ENCODE measurements at regions of chr5 and their contacts with region 1.

Region 1: GRCh38 chr5:139517683-139518564 is 35.4 kb upstream of the STING1 start:
- DNase-seq: peak; percentile 57 to 89
- H3K4me3 ChIP-seq: peak overlapping the region; percentile 60
- H3K27ac ChIP-seq: no peak overlapping the region
- H3K4me1 ChIP-seq: no peaks in the 10 kb centered on the region
- H3K27me3 ChIP-seq: no peaks in the 10 kb centered on the region
- CTCF ChIP-seq: peak; percentile 93

Region 2: GRCh38 chr5:139422307-139422893 is 95.5 kb before region 1 on chr5:
- CTCF ChIA-PET with region 1: interaction called, 15 read pairs
- POLR2A ChIA-PET with region 1: no interaction called
- intact Hi-C with region 1: loop called (anchors 1 kb)
- DNase-seq: peak; percentile 33 to 55
- H3K4me3 ChIP-seq: no peak overlapping the region
- H3K27ac ChIP-seq: no peak overlapping the region
- H3K4me1 ChIP-seq: no peaks in the 10 kb centered on the region
- H3K27me3 ChIP-seq: no peaks in the 10 kb centered on the region
- CTCF ChIP-seq: peak; percentile 83

Region 3: GRCh38 chr5:139482050-139482889 is 35.7 kb before region 1 on chr5 and contains the start of gene STING1:
- CTCF ChIA-PET with region 1: interaction called, 6 read pairs
- POLR2A ChIA-PET with region 1: no interaction called
- intact Hi-C with region 1: loop called (anchors 1 kb)
- DNase-seq: peak; percentile 86 to 94
- H3K4me3 ChIP-seq: peak within 1 kb of the TSS; percentile 39; the same call in 1 of the 2 replicates
- H3K27ac ChIP-seq: peak within 1 kb of the TSS; percentile 80
- H3K4me1 ChIP-seq: peaks cover 28% of the 10 kb centered on the region
- H3K27me3 ChIP-seq: no peaks in the 10 kb centered on the region
- CTCF ChIP-seq: no peak
- total RNA-seq, gene STING1: 27.4 and 27.6 TPM in 2 replicates

Region 4: DNA sequence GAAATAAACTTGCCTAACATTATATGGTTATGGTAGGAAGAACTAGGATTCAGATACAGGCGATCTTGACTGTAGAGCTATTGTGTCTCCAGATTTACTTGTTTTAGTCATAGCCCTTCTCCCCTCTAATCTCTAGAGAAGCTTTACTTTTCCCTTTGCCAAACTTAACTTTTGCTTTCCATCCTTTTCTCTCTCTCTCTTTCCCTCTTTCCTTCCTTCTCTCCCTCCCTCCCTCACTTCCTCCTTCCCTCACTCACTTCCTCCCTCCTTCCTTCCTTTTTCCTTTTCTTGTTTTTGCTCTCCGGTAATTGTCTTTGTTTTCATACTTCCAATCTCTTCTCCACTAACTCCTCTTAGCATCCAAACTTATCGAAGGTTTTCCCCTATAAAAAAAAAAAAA is 53.6 kb after region 1 on chr5:
- CTCF ChIA-PET with region 1: interaction called, 16 read pairs
- POLR2A ChIA-PET with region 1: no interaction called
- intact Hi-C with region 1: no loop called
- DNase-seq: no peak
- H3K4me3 ChIP-seq: no peak overlapping the region
- H3K27ac ChIP-seq: peak overlapping the region; percentile 18; the same call in 1 of the 2 replicates
- H3K4me1 ChIP-seq: no peaks in the 10 kb centered on the region
- H3K27me3 ChIP-seq: no peaks in the 10 kb centered on the region
- CTCF ChIP-seq: no peak

Measured in PC-9 (cell line).